CD4-positive, alpha-beta T cell (primary cell): ENCODE measurements at regions of chr5 and their contacts with region 1.

Region 1: GRCh38 chr5:7868773-7869473 is at the starts of genes FASTKD3 and MTRR:
- DNase-seq: peak; percentile 76 to 94 (median 86)
- ATAC-seq: peak; percentile 99
- H3K4me3 ChIP-seq: peak within 1 kb of the TSS; percentile 86
- H3K4me3 Mint-ChIP-seq: peak within 1 kb of the TSS; percentile 93
- H3K27ac ChIP-seq: peak within 1 kb of the TSS; percentile 2 to 55
- H3K27ac Mint-ChIP-seq: peak within 1 kb of the TSS; percentile 90
- H3K4me1 ChIP-seq: peaks cover 39% of the 10 kb centered on the region
- H3K4me1 Mint-ChIP-seq: peaks cover 79% of the 10 kb centered on the region
- H3K27me3 ChIP-seq: no peaks in the 10 kb centered on the region
- H3K27me3 Mint-ChIP-seq: no peaks in the 10 kb centered on the region
- CTCF ChIP-seq: no peak
- total RNA-seq, gene FASTKD3: 2.6 to 3.4 TPM
- total RNA-seq, gene MTRR: 74.6 to 77.5 TPM

Region 2: GRCh38 chr5:6632917-6633468 is 1235.9 kb before region 1 on chr5 and contains the starts of genes NSUN2 and SRD5A1:
- CTCF ChIA-PET with region 1: no interaction called
- POLR2A ChIA-PET with region 1: no interaction called
- intact Hi-C with region 1: loop called (anchors 5 to 10 kb)
- DNase-seq: peak; percentile 78 to 97 (median 90)
- ATAC-seq: peak; percentile 88
- H3K4me3 ChIP-seq: peak within 1 kb of the TSS; percentile 87
- H3K4me3 Mint-ChIP-seq: peak within 1 kb of the TSS; percentile 90
- H3K27ac ChIP-seq: peak within 1 kb of the TSS; percentile 62 to 98
- H3K27ac Mint-ChIP-seq: peak within 1 kb of the TSS; percentile 93
- H3K4me1 ChIP-seq: peaks cover 33% of the 10 kb centered on the region
- H3K4me1 Mint-ChIP-seq: peaks cover 53% of the 10 kb centered on the region
- H3K27me3 ChIP-seq: no peaks in the 10 kb centered on the region
- H3K27me3 Mint-ChIP-seq: no peaks in the 10 kb centered on the region
- CTCF ChIP-seq: no peak
- total RNA-seq, gene NSUN2: 48.3 to 50.8 TPM
- total RNA-seq, gene SRD5A1: 2.3 to 3.0 TPM

Region 3: DNA sequence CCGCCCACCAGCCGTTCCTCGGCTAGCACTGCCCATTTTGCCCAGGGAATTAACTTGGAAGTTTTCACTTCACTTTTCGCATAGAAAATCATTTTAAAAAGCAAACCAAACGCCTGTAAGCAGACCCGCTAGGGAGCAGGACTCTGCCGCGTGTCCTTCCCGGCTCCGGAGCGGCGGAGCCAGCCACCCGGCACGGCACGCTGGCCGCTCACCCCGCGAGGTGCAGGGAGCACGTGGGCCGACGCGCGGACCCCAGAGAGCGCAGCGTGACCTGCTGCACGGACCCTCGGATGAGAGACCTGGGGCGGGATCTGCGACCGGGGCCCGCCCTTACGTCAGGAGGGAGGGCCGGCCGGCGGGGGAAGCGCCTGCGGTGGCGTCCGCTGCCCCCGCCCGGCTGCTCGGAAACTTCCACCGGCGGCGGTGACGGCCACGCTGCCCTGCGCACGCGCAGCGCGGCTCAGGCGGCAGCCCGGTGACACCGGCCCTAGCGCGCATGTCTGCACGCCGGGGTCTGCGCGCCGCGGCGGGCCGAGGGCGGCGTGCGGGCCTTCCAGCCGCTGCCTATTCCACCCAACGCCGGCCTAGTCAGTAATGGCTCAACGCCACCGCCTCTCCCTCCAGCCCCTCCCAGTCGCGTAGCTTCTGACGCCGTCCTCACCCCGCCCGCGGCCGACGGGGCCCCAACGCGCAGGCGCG is 1156.2 kb before region 1 on chr5:
- CTCF ChIA-PET with region 1: no interaction called
- POLR2A ChIA-PET with region 1: no interaction called
- intact Hi-C with region 1: loop called in 1 of 2 experiments (anchors 5 kb)
- DNase-seq: peak in 9 of 14 experiments; percentile 94 to 99 (median 97)
- ATAC-seq: peak; percentile 71
- H3K4me3 ChIP-seq: peak overlapping the region; percentile 91
- H3K4me3 Mint-ChIP-seq: peak overlapping the region; percentile 95
- H3K27ac ChIP-seq: peak overlapping the region; percentile 72 to 84
- H3K27ac Mint-ChIP-seq: peak overlapping the region; percentile 78
- H3K4me1 ChIP-seq: peaks cover 34% of the 10 kb centered on the region
- H3K4me1 Mint-ChIP-seq: peaks cover 40% of the 10 kb centered on the region
- H3K27me3 ChIP-seq: no peaks in the 10 kb centered on the region
- H3K27me3 Mint-ChIP-seq: no peaks in the 10 kb centered on the region
- CTCF ChIP-seq: no peak

Region 4: DNA sequence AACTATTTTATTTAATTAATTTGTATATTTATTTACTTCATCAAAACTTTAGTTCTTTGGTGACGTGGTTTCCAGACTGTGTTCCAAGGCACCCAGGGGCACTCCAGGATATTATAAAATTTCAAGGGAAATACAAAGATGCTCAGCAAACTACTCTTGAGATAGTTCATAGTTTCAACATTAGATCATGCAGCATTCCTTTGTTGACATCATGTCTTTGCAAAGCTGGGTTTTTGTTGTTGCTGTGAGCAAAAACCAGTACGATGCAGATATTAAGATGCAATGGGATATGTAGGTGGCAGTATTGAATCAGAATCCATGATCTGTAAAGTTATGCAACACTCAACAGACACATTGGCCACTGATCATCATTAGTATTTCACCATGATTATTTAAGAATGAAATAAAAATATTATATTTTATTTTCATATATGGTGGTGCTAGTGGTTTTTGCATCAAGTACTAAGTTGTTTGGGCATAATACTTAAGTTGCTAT is 253.3 kb before region 1 on chr5:
- CTCF ChIA-PET with region 1: no interaction called
- POLR2A ChIA-PET with region 1: no interaction called
- intact Hi-C with region 1: no loop called
- DNase-seq: no peak
- ATAC-seq: no peak
- H3K4me3 ChIP-seq: no peak overlapping the region
- H3K4me3 Mint-ChIP-seq: no peak overlapping the region
- H3K27ac ChIP-seq: no peak overlapping the region
- H3K27ac Mint-ChIP-seq: no peak overlapping the region
- H3K4me1 ChIP-seq: no peaks in the 10 kb centered on the region
- H3K4me1 Mint-ChIP-seq: no peaks in the 10 kb centered on the region
- H3K27me3 ChIP-seq: no peaks in the 10 kb centered on the region
- H3K27me3 Mint-ChIP-seq: no peaks in the 10 kb centered on the region
- CTCF ChIP-seq: no peak

Region 5: GRCh38 chr5:7827610-7828009 is 41.3 kb before region 1 on chr5:
- CTCF ChIA-PET with region 1: no interaction called
- POLR2A ChIA-PET with region 1: no interaction called
- intact Hi-C with region 1: no loop called
- DNase-seq: no peak
- ATAC-seq: no peak
- H3K4me3 ChIP-seq: no peak overlapping the region
- H3K4me3 Mint-ChIP-seq: no peak overlapping the region
- H3K27ac ChIP-seq: no peak overlapping the region
- H3K27ac Mint-ChIP-seq: no peak overlapping the region
- H3K4me1 ChIP-seq: no peaks in the 10 kb centered on the region
- H3K4me1 Mint-ChIP-seq: no peaks in the 10 kb centered on the region
- H3K27me3 ChIP-seq: peaks cover 0 to 4% of the 10 kb centered on the region in 2 experiments
- H3K27me3 Mint-ChIP-seq: peaks cover 29% of the 10 kb centered on the region
- CTCF ChIP-seq: no peak

Region 6: DNA sequence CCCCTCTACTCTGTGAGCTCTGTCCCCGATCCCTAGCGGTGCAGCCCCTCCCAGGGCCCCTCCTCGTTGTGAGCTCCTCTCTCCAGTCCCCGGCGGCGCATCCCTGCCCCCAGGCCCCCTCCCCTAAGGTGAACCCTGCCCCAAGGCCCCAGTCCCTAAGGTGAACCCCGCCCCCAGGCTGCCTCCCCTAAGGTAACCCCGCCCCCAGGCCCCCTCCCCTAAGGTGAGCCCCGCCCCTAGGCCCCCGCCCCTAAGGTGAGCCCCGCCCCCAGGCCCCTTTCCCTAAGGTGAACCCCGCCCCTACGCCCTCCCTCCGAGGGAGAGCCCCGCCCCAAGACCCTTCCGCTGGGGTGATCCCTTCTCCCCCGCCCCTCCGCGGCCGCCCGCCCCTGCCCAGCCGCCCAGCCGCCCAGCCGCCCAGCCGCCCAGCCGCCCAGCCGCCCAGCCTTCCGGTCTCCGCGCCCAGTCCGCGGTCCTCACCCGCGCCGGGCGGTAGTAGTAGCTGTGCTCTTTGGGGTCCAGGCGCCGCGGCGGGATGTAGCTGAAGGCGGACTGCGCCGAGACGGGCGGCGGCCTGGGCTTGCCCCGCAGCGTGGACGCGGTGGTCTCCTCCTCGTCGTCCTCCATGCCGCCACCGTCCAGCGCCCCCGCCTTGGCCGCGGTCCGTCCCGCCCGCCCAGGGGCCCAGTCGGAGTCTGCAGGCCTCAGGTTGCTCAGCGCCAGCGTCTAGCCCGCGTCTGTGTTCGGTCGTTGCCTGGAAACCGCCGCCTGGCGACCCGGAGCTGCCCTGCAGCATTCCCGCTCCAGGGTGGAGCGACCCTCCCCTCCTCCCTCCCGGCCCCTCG is 18.3 kb before region 1 on chr5 and contains the start of gene CFAP90:
- CTCF ChIA-PET with region 1: interaction called, 3 read pairs
- POLR2A ChIA-PET with region 1: interaction called, 17 read pairs
- intact Hi-C with region 1: loop called (anchors 2 kb)
- DNase-seq: peak in 10 of 14 experiments; percentile 4 to 72 (median 39)
- ATAC-seq: peak; percentile 81
- H3K4me3 ChIP-seq: peak within 1 kb of the TSS; percentile 49
- H3K4me3 Mint-ChIP-seq: peak within 1 kb of the TSS; percentile 92
- H3K27ac ChIP-seq: no peak within 1 kb of the TSS
- H3K27ac Mint-ChIP-seq: peak within 1 kb of the TSS; percentile 27
- H3K4me1 ChIP-seq: peaks cover 29% of the 10 kb centered on the region
- H3K4me1 Mint-ChIP-seq: peaks cover 23% of the 10 kb centered on the region
- H3K27me3 ChIP-seq: peaks cover 11 to 16% of the 10 kb centered on the region in 2 experiments
- H3K27me3 Mint-ChIP-seq: peaks cover 28% of the 10 kb centered on the region
- CTCF ChIP-seq: peak; percentile 22
- total RNA-seq, gene CFAP90: not detected

Region 7: DNA sequence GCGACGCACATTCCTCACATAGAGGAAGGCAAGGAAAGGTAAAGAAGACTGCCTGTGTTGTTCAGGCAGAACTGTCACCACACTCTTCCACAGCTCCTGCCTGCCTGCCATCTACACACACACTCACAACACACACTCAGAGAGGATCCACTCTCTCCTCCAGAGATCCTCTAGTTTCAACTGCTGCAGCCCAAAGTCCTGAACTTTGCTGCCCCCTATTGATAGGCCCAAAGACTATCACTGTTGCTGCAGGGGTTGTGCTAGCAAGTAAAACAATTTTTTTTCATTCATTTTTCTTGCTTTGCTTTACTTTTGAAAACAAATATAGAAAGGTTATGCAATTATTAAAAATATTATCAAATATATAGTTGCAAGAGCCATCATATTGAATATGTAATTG is 12.1 kb before region 1 on chr5:
- CTCF ChIA-PET with region 1: interaction called, 4 read pairs
- POLR2A ChIA-PET with region 1: interaction called, 22 read pairs
- intact Hi-C with region 1: loop called in 1 of 2 experiments (anchors 2 kb)
- DNase-seq: peak in 5 of 14 experiments; percentile 20 to 60 (median 55)
- ATAC-seq: peak; percentile 67
- H3K4me3 ChIP-seq: no peak overlapping the region
- H3K4me3 Mint-ChIP-seq: no peak overlapping the region
- H3K27ac ChIP-seq: no peak overlapping the region
- H3K27ac Mint-ChIP-seq: no peak overlapping the region
- H3K4me1 ChIP-seq: peaks cover 19% of the 10 kb centered on the region
- H3K4me1 Mint-ChIP-seq: peaks cover 30% of the 10 kb centered on the region
- H3K27me3 ChIP-seq: no peaks in the 10 kb centered on the region
- H3K27me3 Mint-ChIP-seq: no peaks in the 10 kb centered on the region
- CTCF ChIP-seq: peak; percentile 70

Region 8: DNA sequence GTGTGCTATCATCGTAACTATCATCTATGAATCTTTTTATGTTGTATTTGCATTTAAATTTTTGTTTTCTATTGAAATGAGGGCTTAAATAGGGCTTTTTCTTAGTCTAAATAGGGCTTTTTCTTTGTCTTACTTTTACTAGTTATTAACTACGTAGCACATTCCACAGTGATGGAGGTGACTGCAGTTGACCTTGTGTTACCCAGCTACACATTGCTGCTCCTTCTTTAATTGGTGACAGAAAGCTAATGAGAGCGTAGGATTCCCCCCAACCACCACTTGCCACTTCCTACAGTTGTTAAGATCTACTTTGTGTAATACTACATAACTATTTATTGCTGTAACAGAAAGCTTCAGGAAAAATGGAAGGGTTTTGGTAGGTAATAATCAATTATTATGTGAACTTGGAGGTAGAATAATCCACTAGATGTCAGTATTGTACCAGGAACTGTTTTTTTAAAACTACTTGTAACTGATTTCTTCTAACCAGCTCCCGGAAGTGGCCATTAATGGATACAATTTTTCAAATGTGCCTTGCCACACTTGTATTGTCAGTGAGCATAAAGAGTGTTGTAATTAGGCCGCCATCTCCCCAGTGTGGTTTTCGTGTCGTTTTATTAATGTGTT is 18.0 kb after region 1 on chr5:
- CTCF ChIA-PET with region 1: interaction called, 13 read pairs
- POLR2A ChIA-PET with region 1: interaction called, 3 read pairs
- intact Hi-C with region 1: no loop called
- DNase-seq: peak in 3 of 14 experiments; percentile 54 to 64 (median 54)
- ATAC-seq: peak; percentile 44
- H3K4me3 ChIP-seq: no peak overlapping the region
- H3K4me3 Mint-ChIP-seq: no peak overlapping the region
- H3K27ac ChIP-seq: no peak overlapping the region
- H3K27ac Mint-ChIP-seq: no peak overlapping the region
- H3K4me1 ChIP-seq: no peaks in the 10 kb centered on the region
- H3K4me1 Mint-ChIP-seq: peaks cover 10% of the 10 kb centered on the region
- H3K27me3 ChIP-seq: no peaks in the 10 kb centered on the region
- H3K27me3 Mint-ChIP-seq: no peaks in the 10 kb centered on the region
- CTCF ChIP-seq: peak; percentile 68

Region 9: DNA sequence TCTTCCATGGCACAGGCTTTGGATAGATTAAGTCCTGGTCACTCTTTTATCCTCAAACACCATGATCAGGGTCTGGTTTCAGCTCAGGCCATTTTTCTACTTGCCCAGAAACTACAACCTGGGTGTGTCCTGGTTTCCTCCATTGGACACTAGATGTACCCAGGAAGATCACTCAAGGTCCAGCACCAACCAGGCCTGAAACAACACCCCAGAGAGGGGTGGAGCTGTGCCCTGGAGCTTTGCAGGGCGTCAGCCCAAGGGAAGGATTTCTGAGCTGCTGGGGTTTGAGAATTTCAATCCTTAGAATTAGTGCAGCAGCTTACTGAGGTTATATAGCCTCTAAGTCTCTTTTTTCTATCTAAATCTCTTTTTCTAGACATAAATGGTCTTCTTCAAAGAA is 722.0 kb after region 1 on chr5:
- CTCF ChIA-PET with region 1: no interaction called
- POLR2A ChIA-PET with region 1: no interaction called
- intact Hi-C with region 1: no loop called
- DNase-seq: no peak
- ATAC-seq: no peak
- H3K4me3 ChIP-seq: no peak overlapping the region
- H3K4me3 Mint-ChIP-seq: no peak overlapping the region
- H3K27ac ChIP-seq: no peak overlapping the region
- H3K27ac Mint-ChIP-seq: no peak overlapping the region
- H3K4me1 ChIP-seq: no peaks in the 10 kb centered on the region
- H3K4me1 Mint-ChIP-seq: no peaks in the 10 kb centered on the region
- H3K27me3 ChIP-seq: no peaks in the 10 kb centered on the region
- H3K27me3 Mint-ChIP-seq: no peaks in the 10 kb centered on the region
- CTCF ChIP-seq: no peak